ENCODE measurements at regions of chr3 and their contacts with region 1.

Region 1: DNA sequence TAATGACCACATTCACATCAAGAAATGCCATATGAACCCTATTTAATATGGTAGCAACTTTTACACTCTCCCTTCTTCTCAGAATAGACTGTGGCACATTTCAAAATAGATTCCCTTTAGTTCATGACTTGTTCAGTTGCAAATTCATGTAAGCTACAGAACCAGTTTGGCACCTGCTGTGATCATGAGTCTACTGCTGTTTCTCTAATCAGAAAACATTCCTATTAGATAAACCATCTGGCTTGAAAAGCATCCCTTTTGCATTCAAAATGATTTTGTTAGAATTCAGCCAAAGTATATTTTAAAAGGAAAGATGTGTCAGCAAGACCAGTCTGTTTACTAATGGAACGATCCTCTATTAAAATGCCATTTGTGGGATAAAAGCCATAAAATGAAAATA is 304.4 kb downstream of the BCHE start:
- DNase-seq: no peak
- ATAC-seq: no peak

Region 2: DNA sequence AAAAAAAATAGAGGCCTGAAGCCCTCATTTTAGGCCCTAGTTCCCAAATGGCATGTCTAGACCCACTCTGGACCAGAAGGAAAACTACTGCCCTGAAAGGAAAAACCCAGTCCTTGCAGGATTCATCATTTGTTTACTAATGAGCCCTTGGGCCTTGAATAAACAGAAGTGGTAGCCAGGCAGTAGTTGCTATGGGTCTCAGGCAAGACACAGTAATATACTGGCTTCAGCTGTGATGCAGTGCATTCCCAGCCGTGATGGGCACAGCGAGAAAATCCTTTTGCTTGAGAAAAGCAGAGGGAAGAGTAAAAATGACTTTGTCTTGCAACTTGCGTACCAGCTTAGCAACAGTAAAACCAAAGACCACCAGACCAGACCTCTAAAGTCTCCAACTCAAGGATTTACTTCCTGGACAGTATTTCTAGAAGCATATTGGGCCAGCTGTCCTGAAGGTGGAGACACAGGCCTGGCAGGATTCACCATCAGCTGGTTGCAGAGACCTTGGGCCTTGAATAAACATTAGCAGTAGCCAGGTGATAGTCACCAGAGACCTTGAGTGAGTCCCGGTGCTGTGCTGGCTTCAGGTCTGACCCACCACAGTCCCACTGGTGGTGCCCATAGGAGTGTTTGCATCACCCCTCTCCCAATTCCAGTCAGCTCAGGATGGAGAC is 128.4 kb before region 1 on chr3:
- intact Hi-C with region 1: loop called (anchors 2 kb)
- DNase-seq: no peak
- ATAC-seq: no peak